Sciatic nerve (tissue), 2 donors: ENCODE measurements at regions of chr13 and their contacts with region 1.

Region 1: GRCh38 chr13:23871616-23872220 is 17.5 kb downstream of the MIPEP start:
- DNase-seq: no peak
- ATAC-seq: peak; percentile 64

Region 2: GRCh38 chr13:23466144-23467002 is 405.3 kb before region 1 on chr13:
- intact Hi-C with region 1: loop called (anchors 5 kb)
- DNase-seq: peak; percentile 84
- ATAC-seq: peak; percentile 94

Region 3: DNA sequence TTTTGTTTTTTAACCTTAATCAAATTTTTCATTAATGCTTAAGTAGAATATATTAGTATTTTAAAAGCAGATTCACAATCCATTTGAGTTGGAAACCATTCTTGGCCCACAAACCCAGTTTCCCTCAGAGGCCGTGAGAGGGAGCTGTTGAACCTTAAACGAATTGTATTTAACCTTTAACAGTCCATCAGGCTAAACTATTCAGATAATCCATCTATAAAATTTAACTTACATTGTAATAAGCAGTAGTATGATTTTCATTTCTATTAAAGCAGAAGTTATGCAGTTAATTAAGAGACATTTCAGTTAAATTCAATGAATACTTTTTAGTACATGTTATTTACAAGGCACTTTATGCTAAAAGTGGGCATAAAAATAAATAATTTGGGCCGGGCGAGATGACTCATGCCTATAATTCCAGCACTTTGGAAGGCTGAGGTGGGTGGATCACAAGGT is 148.7 kb after region 1 on chr13:
- intact Hi-C with region 1: no loop called
- DNase-seq: no peak
- ATAC-seq: peak; percentile 69

Region 4: GRCh38 chr13:24875561-24875960 is 1003.8 kb after region 1 on chr13:
- intact Hi-C with region 1: no loop called
- DNase-seq: no peak
- ATAC-seq: no peak